Keratinocyte (primary cell): ENCODE measurements at regions of chr10 and their contacts with region 1.

Region 1: GRCh38 chr10:75723319-75723980 is 292.0 kb downstream of the LRMDA start:
- DNase-seq: no peak
- H3K4me3 ChIP-seq: no peak overlapping the region
- H3K27ac ChIP-seq: no peak overlapping the region
- H3K4me1 ChIP-seq: no peaks in the 10 kb centered on the region
- H3K27me3 ChIP-seq: no peaks in the 10 kb centered on the region
- CTCF ChIP-seq: no peak

Region 2: GRCh38 chr10:75632805-75633462 is 90.5 kb before region 1 on chr10:
- dilution Hi-C with region 1: no loop called
- DNase-seq: no peak
- H3K4me3 ChIP-seq: no peak overlapping the region
- H3K27ac ChIP-seq: no peak overlapping the region
- H3K4me1 ChIP-seq: no peaks in the 10 kb centered on the region
- H3K27me3 ChIP-seq: no peaks in the 10 kb centered on the region
- CTCF ChIP-seq: no peak

Region 3: GRCh38 chr10:75755528-75755927 is 32.1 kb after region 1 on chr10:
- dilution Hi-C with region 1: loop called (anchors 5 kb)
- DNase-seq: no peak
- H3K4me3 ChIP-seq: no peak overlapping the region
- H3K27ac ChIP-seq: no peak overlapping the region
- H3K4me1 ChIP-seq: no peaks in the 10 kb centered on the region
- H3K27me3 ChIP-seq: no peaks in the 10 kb centered on the region
- CTCF ChIP-seq: no peak